CD8-positive, alpha-beta T cell (primary cell): ENCODE measurements at regions of chr5 and their contacts with region 1.

Region 1: DNA sequence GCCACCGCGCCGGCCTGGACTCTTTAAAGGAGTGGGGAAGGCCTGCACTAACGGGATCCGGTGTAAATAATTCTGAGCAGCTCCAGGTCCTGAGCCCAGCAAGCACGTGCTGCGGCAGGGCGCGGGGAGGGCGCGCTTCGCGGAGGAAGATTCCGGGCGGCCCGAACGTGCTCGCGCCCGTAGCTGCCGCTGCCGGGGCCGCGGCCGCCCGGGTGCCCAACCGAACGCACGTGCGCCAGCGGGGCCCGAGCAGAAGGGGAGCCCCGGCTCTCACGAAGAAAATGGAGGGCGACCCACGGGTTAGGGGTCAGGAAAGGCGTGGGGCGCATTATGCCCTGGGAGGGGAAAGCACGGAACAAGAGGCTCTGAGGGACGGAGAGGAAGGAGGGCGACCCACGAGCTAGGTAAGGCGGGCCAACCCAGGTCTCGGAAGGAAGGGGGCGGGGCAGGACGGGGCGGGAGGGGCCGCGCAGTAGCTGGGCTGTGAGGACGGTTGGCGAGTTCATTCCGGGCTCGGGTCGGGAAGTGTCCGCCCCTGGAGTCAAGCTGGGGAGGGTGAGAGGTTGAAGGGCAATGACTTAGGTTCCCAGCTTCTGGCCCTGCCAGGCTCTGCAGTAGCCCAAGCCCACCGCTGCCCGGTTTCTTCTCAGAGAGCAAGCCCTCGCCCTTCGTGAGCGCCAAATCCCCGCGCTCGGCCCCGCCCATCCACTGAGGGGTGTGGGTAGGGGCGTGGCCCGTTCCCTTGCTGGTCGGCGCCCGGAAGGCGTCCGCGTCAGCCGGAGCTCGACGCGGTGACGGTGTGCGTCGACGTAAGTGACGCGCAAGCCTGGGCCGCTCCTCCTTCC is at the start of gene ZNF131:
- DNase-seq: peak; percentile 95 to 99 (median 97)
- ATAC-seq: peak; percentile 87
- H3K4me3 ChIP-seq: peak within 1 kb of the TSS; percentile 74 to 82
- H3K4me3 Mint-ChIP-seq: peak within 1 kb of the TSS; percentile 96
- H3K27ac ChIP-seq: peak within 1 kb of the TSS; percentile 87 to 98
- H3K27ac Mint-ChIP-seq: peak within 1 kb of the TSS; percentile 98
- H3K4me1 ChIP-seq: peaks cover 34% of the 10 kb centered on the region
- H3K4me1 Mint-ChIP-seq: peaks cover 39% of the 10 kb centered on the region
- H3K27me3 ChIP-seq: no peaks in the 10 kb centered on the region
- H3K27me3 Mint-ChIP-seq: no peaks in the 10 kb centered on the region
- CTCF ChIP-seq: no peak
- total RNA-seq, gene ZNF131: 76.7 to 84.9 TPM

Region 2: GRCh38 chr5:41924872-41925554 is 1195.9 kb before region 1 on chr5 and contains the start of gene FBXO4:
- CTCF ChIA-PET with region 1: no interaction called
- POLR2A ChIA-PET with region 1: interaction called, 3 read pairs
- intact Hi-C with region 1: loop called in 1 of 2 experiments (anchors 10 kb)
- DNase-seq: peak; percentile 79 to 96 (median 88)
- ATAC-seq: peak; percentile 96
- H3K4me3 ChIP-seq: peak within 1 kb of the TSS; percentile 79 to 87
- H3K4me3 Mint-ChIP-seq: peak within 1 kb of the TSS; percentile 87
- H3K27ac ChIP-seq: peak within 1 kb of the TSS; percentile 91 to 98
- H3K27ac Mint-ChIP-seq: peak within 1 kb of the TSS; percentile 99
- H3K4me1 ChIP-seq: peaks cover 16% of the 10 kb centered on the region
- H3K4me1 Mint-ChIP-seq: peaks cover 28% of the 10 kb centered on the region
- H3K27me3 ChIP-seq: no peaks in the 10 kb centered on the region
- H3K27me3 Mint-ChIP-seq: no peaks in the 10 kb centered on the region
- CTCF ChIP-seq: peak; percentile 57
- total RNA-seq, gene FBXO4: 4.4 to 4.7 TPM

Region 3: GRCh38 chr5:43008369-43009153 is 112.4 kb before region 1 on chr5:
- CTCF ChIA-PET with region 1: no interaction called
- POLR2A ChIA-PET with region 1: interaction called, 37 read pairs
- intact Hi-C with region 1: no loop called
- DNase-seq: peak; percentile 86 to 97 (median 93)
- ATAC-seq: peak; percentile 63
- H3K4me3 ChIP-seq: peak overlapping the region; percentile 70 to 81
- H3K4me3 Mint-ChIP-seq: peak overlapping the region; percentile 98
- H3K27ac ChIP-seq: peak overlapping the region; percentile 94 to 96
- H3K27ac Mint-ChIP-seq: peak overlapping the region; percentile 96
- H3K4me1 ChIP-seq: peaks cover 25% of the 10 kb centered on the region
- H3K4me1 Mint-ChIP-seq: peaks cover 34% of the 10 kb centered on the region
- H3K27me3 ChIP-seq: no peaks in the 10 kb centered on the region
- H3K27me3 Mint-ChIP-seq: no peaks in the 10 kb centered on the region
- CTCF ChIP-seq: no peak

Region 4: DNA sequence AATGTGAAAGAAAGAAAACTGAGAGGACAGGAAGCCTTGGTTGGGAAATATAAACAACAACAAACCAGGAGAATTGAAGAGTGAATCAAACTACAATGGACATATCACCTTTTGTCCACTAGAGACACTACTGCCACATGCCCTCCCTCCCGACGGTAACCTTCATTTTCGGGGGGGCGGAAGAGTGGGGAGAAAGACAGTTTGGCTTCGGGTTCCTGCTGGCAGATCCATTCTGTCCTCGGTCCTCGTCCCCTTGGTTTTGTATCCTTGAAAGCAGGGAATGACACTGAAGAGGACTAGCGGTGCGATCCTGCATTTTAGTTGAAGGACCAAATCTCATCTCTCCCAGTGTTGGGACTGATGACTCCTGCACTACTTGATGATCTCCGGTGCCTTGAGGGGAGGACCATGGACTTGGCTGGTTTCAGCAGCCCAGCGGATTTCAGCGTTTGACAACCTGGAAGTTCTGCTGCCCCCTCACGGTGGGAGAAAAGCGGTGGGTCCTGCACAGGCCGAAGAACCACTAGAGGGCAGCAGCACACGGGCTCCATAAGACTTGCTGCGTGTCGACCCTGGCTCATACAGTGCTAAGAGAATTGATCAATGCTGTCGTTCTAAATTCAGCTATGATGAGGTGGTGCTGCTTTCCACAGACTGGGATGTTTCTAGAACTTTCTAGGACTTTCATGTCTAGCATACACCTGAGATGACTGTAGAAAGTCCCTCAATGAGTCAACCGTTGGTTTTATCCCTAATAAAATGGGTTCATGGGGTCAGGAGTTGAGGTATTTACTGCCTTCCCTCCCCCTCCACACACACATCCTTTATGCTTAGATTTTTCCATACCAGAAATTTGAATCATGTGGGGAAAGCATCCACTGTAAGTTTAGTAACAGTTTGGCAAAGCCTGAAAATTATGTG is 15.3 kb before region 1 on chr5:
- CTCF ChIA-PET with region 1: interaction called, 149 read pairs
- POLR2A ChIA-PET with region 1: interaction called, 47 read pairs
- intact Hi-C with region 1: loop called (anchors 1 to 2 kb)
- DNase-seq: peak; percentile 81 to 96 (median 91)
- ATAC-seq: peak; percentile 94
- H3K4me3 ChIP-seq: peak overlapping the region; percentile 55 to 56
- H3K4me3 Mint-ChIP-seq: peak overlapping the region; percentile 84
- H3K27ac ChIP-seq: peak overlapping the region in 1 of 2 experiments; percentile 58
- H3K27ac Mint-ChIP-seq: peak overlapping the region; percentile 84
- H3K4me1 ChIP-seq: peaks cover 27% of the 10 kb centered on the region
- H3K4me1 Mint-ChIP-seq: peaks cover 35% of the 10 kb centered on the region
- H3K27me3 ChIP-seq: no peaks in the 10 kb centered on the region
- H3K27me3 Mint-ChIP-seq: no peaks in the 10 kb centered on the region
- CTCF ChIP-seq: peak; percentile 100

Region 5: DNA sequence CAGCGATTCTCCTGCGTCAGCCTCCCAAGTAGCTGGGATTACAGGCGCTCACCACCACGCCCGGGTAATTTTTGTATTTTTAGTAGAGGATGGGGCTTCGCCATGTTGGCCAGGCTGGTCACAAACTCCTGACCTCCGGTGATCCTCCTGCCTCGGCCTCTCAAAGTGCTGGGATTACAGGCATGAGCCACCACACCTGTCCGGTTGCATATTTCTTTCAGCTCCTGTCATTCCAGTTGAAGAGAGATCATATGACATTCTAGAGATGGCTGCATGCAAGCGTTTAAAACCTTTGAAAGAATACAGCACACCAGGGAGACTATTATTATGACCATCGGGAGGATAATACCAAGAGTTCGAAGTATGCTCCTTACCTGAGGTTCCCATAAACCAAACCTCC is 61.5 kb after region 1 on chr5:
- CTCF ChIA-PET with region 1: no interaction called
- POLR2A ChIA-PET with region 1: no interaction called
- intact Hi-C with region 1: no loop called
- DNase-seq: no peak
- ATAC-seq: no peak
- H3K4me3 ChIP-seq: no peak overlapping the region
- H3K4me3 Mint-ChIP-seq: no peak overlapping the region
- H3K27ac ChIP-seq: no peak overlapping the region
- H3K27ac Mint-ChIP-seq: no peak overlapping the region
- H3K4me1 ChIP-seq: no peaks in the 10 kb centered on the region
- H3K4me1 Mint-ChIP-seq: no peaks in the 10 kb centered on the region
- H3K27me3 ChIP-seq: no peaks in the 10 kb centered on the region
- H3K27me3 Mint-ChIP-seq: no peaks in the 10 kb centered on the region
- CTCF ChIP-seq: no peak

Region 6: DNA sequence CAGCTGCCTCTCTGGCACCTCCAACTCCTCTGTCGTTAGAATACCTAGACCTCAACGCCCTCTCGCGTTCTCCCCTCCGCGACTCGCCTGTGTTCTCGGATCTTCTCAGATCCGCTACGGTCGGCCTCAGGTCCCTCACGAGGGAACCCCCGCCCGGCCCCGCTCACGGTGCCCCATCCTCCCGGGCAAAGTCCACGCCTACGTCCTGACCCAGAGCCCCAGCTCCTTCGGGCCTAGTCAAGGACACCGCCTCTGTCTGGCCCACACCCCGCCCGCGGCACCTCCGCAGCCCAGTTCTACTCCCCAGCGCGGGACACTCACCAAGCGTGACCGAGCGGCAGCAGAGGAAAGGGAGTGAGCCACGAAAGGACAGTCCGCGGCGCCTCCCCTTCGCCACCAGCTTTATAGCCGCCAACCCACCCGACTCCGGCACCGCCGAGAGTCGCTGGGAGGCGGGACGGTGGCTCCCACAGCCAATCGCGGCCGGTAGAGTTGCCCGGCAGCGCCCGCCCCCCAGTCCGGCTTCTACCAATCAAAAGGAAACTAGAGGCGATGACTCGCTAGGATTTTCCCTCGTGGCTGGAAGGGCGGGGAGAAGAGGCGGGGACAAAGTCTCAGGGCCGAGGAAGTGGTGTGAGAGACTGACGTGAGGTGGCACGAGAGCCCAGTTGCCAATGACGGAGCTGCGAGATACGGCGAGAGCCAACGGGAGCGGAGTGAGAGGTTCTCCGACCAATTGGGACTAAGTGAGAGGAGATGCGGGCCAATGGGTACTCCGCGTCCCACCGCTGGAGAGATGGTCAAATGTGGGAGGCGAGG is 192.3 kb after region 1 on chr5 and contains the start of gene HMGCS1:
- CTCF ChIA-PET with region 1: interaction called, 4 read pairs
- POLR2A ChIA-PET with region 1: interaction called, 39 read pairs
- intact Hi-C with region 1: loop called (anchors 1 to 2 kb)
- DNase-seq: peak; percentile 95 to 100 (median 98)
- ATAC-seq: peak; percentile 90
- H3K4me3 ChIP-seq: peak within 1 kb of the TSS; percentile 69 to 97
- H3K4me3 Mint-ChIP-seq: peak within 1 kb of the TSS; percentile 95
- H3K27ac ChIP-seq: peak within 1 kb of the TSS; percentile 84 to 98
- H3K27ac Mint-ChIP-seq: peak within 1 kb of the TSS; percentile 94
- H3K4me1 ChIP-seq: peaks cover 16% of the 10 kb centered on the region
- H3K4me1 Mint-ChIP-seq: peaks cover 40% of the 10 kb centered on the region
- H3K27me3 ChIP-seq: no peaks in the 10 kb centered on the region
- H3K27me3 Mint-ChIP-seq: no peaks in the 10 kb centered on the region
- CTCF ChIP-seq: peak; percentile 21
- total RNA-seq, gene HMGCS1: 74.1 to 74.7 TPM

Region 7: GRCh38 chr5:43556857-43557542 is 436.1 kb after region 1 on chr5 and contains the start of gene PAIP1:
- CTCF ChIA-PET with region 1: no interaction called
- POLR2A ChIA-PET with region 1: interaction called, 3 read pairs
- intact Hi-C with region 1: loop called (anchors 1 to 5 kb)
- DNase-seq: peak; percentile 67 to 92 (median 83)
- ATAC-seq: peak; percentile 81
- H3K4me3 ChIP-seq: peak within 1 kb of the TSS; percentile 73 to 88
- H3K4me3 Mint-ChIP-seq: peak within 1 kb of the TSS; percentile 90
- H3K27ac ChIP-seq: peak within 1 kb of the TSS; percentile 82 to 93
- H3K27ac Mint-ChIP-seq: peak within 1 kb of the TSS; percentile 97
- H3K4me1 ChIP-seq: peaks cover 45% of the 10 kb centered on the region
- H3K4me1 Mint-ChIP-seq: peaks cover 13% of the 10 kb centered on the region
- H3K27me3 ChIP-seq: no peaks in the 10 kb centered on the region
- H3K27me3 Mint-ChIP-seq: peaks cover 2% of the 10 kb centered on the region
- CTCF ChIP-seq: peak; percentile 77
- total RNA-seq, gene PAIP1: 40.3 to 45.7 TPM